Activated CD4-positive, alpha-beta T cell treated with anti-CD3 and anti-CD28 coated beads, Interleukin-2, amount 10 ng/mL, durations not matched to agents 24 days and 14 days (primary cell): ENCODE measurements at regions of chr16 and their contacts with region 1.

Region 1: DNA sequence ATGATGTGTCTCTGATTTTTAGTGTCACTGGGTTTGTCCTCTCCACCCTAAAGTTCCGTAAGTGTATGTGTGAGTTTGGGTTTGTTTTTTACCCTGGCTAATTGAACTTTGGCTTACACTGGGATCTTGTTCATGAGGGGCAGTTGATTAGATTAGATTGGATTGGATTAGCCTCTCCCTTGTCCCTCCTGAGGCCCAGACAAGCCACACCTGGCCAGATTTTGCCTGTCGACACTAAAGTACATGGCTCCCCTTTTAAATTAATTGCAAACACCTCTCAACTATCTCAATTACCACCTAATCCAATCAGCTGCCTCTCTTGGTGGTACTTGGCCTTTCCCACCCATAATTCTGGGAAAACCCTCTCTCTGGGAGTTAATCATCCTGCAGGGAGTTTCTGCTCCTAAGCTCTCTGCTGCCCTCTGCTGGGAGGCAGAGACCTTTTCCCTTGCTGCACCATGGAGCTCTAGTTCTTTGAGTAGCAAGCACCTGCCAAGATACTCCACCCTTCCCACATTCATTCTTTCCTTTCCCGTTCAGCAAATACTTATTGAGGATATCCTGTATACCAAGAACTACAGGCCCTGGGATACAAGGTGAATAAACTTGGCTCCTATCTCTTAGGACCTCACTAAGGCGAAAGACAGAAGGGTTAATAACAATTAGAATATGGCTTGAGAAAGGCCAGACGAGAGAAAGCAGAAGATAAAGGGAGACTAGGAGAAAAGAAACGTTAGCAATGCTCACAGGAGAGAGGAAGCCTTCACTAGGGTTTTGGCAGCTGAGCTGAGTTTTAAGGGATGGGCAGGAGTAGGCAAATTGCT is 60.0 kb upstream of the MPHOSPH6 start:
- DNase-seq: peak; percentile 89
- H3K4me3 Mint-ChIP-seq: no peak overlapping the region
- H3K27ac Mint-ChIP-seq: no peak overlapping the region
- H3K4me1 Mint-ChIP-seq: no peaks in the 10 kb centered on the region
- H3K27me3 Mint-ChIP-seq: peaks cover 21% of the 10 kb centered on the region

Region 2: GRCh38 chr16:81885976-81886586 is 343.9 kb before region 1 on chr16:
- intact Hi-C with region 1: loop called (anchors 1 kb)
- DNase-seq: peak; percentile 77
- H3K4me3 Mint-ChIP-seq: no peak overlapping the region
- H3K27ac Mint-ChIP-seq: no peak overlapping the region
- H3K4me1 Mint-ChIP-seq: no peaks in the 10 kb centered on the region
- H3K27me3 Mint-ChIP-seq: no peaks in the 10 kb centered on the region

Region 3: GRCh38 chr16:81940781-81941560 is 289.0 kb before region 1 on chr16:
- intact Hi-C with region 1: loop called (anchors 1 kb)
- DNase-seq: no peak
- H3K4me3 Mint-ChIP-seq: no peak overlapping the region
- H3K27ac Mint-ChIP-seq: no peak overlapping the region
- H3K4me1 Mint-ChIP-seq: no peaks in the 10 kb centered on the region
- H3K27me3 Mint-ChIP-seq: no peaks in the 10 kb centered on the region

Region 4: DNA sequence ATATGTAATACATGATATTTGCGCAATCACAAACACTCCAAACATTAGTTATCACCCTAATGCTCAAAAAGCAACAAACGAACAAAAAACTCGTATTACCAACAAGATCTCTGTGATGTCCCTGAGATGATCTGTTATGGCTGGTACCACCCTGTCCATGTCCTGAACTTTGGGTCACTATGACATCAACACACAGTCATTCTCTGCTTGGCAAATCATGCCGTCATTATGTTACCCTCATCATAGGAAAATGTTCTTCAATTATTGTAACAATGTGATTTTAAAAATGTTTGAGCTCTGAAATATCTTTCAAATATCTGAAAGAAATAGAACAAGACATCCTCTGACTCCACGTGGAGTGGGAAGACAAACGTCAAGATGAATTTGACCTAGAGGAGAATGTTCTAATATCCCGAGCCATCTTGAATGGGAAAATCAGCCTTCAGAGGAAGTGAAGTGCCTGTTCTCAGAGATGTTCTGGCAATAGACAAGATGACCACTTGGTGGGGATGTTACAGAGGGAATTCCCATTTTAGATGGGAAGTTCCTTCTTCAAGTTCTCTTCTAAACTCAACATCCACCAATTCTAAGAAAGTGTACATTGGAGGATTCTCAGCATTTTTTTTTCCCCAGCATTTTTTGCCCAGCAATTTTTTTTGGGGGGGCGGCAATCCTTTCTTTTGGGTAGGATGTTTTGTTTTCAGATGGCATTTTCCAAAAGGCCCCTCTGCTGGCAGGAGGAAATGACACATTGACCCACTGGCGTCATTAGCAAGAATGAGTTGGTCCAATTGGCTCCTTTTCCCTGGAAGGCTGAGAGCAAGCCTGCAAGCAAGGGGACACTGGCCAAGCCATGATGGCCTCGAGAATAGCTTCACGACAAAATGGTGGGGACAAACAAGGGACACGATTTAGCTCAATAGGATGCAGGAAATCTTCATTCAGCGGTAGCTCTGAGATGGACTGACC is 198.6 kb before region 1 on chr16:
- intact Hi-C with region 1: loop called (anchors 1 kb)
- DNase-seq: no peak
- H3K4me3 Mint-ChIP-seq: no peak overlapping the region
- H3K27ac Mint-ChIP-seq: no peak overlapping the region
- H3K4me1 Mint-ChIP-seq: no peaks in the 10 kb centered on the region
- H3K27me3 Mint-ChIP-seq: peaks cover 10% of the 10 kb centered on the region

Region 5: DNA sequence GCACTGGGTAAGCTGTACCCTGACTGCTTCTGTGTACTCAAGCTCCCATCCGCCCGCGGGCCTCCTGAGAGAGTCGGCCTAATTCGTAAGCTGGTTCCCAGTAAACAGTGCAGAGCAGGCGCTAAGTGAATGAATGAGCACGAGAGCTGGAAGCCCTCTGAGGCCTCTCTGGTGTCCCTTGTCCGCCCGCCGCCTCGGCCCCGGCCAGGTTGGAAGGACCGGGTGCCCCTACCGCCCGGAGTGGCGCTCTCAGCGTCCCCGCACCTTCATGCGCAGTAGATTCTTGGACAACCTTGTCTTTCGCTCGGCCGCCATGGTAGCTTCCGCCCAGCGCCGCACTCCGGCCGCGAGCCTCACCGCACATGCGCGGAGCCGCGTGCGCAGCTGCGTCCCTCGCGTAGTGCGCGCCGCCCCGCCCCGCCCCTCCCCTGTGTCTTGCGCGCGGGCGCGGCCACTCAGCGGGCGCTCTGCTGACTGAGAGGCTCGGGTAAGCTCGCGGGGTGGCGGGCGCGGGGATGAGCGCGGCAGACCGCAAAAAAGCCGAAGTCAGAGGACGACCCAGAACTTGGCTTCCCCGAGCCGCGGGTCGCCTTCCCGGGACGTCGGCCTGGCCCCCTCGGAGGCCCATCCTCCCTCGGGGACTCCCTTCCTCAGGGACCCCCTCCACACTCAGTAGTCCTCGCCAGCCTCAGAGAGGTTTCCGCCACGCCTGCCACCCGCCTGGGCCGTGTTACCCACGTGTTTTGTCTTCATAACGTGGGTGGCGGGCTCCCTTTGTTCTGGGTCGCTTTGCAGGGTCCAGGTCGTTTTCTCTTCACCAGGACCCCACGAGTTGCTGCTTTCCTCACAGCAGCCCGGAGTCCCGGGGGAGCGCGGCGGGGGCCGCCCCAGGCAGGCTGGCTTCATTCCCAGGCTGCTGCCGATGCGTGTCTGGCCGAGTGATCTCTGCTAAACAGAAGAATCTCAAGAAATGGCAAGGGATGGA is 59.9 kb before region 1 on chr16 and contains the start of gene MPHOSPH6:
- intact Hi-C with region 1: loop called (anchors 5 kb)
- DNase-seq: peak; percentile 97
- H3K4me3 Mint-ChIP-seq: peak within 1 kb of the TSS; percentile 91
- H3K27ac Mint-ChIP-seq: peak within 1 kb of the TSS; percentile 96
- H3K4me1 Mint-ChIP-seq: peaks cover 15% of the 10 kb centered on the region
- H3K27me3 Mint-ChIP-seq: peaks cover 33% of the 10 kb centered on the region
- total RNA-seq, gene MPHOSPH6: 54.1 and 54.8 TPM in 2 replicates